ENCODE measurements at regions of chr12 and their contacts with region 1.

Region 1: DNA sequence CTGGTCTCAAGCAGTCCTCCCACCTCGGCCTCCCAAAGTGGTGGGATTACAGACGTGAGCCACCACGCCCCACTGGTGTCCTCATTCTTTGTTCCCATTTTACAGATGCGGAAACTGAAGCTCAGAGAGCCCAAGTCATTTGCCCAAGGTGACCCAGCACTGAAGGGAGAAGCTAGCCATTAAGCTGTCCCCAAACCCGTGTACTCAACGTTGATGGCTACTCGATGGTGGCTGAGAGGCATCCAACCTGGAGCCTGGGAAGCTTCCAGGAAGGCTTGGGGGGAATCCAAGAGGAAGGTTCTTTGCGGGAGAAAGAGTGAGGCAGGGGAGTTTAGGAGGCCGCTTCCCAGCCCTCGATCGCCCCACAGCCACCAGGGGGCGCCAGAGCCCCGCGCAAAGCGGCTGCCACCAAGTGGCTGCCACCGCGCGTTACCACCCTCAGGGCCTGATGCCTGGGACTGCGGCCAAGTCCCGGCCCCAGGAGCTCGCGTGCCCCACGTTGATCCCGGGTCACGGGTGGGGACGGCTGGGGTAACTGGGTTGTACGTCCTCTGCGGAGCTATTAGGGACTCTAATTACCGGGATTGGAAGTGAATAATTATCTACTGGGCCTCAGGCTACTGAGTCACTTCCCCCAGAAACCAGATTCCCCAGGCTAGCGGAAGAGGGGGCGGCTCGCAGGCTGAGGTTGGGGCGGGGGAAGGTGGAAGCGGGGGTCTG is 8.8 kb upstream of the SH2B3 start:
- DNase-seq: peak; percentile 71 to 90 (median 82)
- H3K4me3 ChIP-seq: peak overlapping the region in 57 of 59 donors; percentile 9 to 66 (median 41)
- H3K27ac ChIP-seq: peak overlapping the region in 30 of 59 donors; percentile 2 to 76 (median 48)
- H3K27me3 ChIP-seq: no peaks in the 10 kb centered on the region
- CTCF ChIP-seq: peak; percentile 95 to 100 (median 100)

Region 2: GRCh38 chr12:111451649-111452129 is 54.8 kb after region 1 on chr12:
- intact Hi-C with region 1: loop called (anchors 1 kb)
- DNase-seq: peak in 3 of 10 donors; percentile 9 to 32 (median 28)
- H3K4me3 ChIP-seq: no peak overlapping the region
- H3K27ac ChIP-seq: peak overlapping the region in 51 of 59 donors; percentile 10 to 88 (median 66)
- H3K27me3 ChIP-seq: no peaks in the 10 kb centered on the region
- CTCF ChIP-seq: peak; percentile 82 to 98 (median 91)

Region 3: DNA sequence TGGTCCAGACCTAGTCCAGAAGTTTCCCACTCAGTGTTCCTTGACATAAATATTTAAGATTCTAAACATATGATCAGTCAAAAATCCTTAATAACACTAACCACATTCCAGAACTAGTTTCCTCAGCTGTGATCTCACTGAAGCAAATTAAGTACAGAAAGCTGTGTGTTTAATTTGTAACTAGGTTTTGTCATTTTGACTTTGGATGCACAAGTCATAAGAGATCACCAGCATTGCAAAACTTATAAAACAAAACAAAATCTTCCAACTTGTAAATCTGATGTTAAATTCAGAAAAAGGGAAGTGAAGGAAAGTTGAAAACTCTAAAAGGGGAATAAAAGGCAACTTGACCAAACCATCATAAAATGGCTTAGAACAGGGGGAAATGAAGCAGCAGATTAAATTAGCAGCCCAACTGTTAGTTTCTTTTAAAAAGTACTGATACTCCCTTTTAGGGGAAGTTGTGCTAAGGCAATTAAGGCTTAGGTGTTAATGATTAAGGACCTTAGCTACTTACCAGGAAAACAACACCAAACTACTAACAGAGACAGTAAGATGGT is 65.4 kb after region 1 on chr12:
- intact Hi-C with region 1: no loop called
- DNase-seq: no peak
- H3K4me3 ChIP-seq: no peak overlapping the region
- H3K27ac ChIP-seq: peak overlapping the region in 2 of 59 donors; percentile 21 to 25
- H3K27me3 ChIP-seq: no peaks in the 10 kb centered on the region
- CTCF ChIP-seq: no peak

Region 4: DNA sequence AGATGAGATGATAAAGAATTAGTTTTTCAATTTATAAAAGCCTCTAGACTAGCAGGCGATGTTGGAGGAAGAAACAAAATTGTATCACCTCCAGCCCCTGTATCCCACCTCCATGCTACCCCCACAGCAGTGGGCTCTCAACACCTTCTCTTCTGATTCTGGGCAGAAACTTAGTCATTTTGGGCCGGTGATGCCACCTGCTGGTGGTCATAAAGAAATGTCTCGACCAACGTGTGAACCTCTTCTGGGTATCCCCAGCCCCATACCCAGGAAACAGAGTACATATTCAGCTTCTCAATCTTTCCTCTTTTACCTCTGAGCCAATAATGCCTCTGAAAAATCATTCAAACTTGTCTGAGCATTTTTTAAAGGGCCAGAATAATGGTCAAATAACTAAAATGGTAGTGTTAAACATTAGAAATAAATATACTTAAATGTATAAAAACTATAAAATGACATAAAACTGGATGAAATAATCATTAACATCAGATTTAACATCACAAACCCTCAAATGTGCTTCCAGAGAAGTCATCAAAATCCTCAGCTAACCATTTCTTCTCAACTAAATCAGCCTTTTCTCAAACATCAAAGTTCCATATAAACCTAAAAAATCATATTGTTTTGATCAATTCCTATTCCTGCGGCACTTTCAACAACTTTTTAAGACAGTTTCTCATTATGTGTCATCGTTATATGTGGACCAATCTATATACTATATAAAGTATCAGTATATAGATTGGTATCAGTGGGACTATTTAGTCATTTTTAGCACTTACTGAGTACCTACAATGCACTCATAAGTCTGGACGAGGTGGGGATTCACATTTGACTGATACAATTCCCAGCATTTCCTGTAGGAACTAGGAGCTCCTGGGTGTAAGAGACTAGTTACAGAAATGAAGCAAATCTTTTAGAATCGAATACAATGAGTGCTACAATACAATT is 132.8 kb after region 1 on chr12:
- intact Hi-C with region 1: loop called (anchors 2 to 5 kb)
- DNase-seq: peak in 6 of 10 donors; percentile 26 to 53 (median 45)
- H3K4me3 ChIP-seq: no peak overlapping the region
- H3K27ac ChIP-seq: peak overlapping the region in 2 of 59 donors; percentile 21 to 44
- H3K27me3 ChIP-seq: no peaks in the 10 kb centered on the region
- CTCF ChIP-seq: peak; percentile 51 to 85 (median 73)

Region 5: GRCh38 chr12:111673503-111673902 is 276.6 kb after region 1 on chr12:
- intact Hi-C with region 1: loop called (anchors 1 to 10 kb)
- DNase-seq: no peak
- H3K4me3 ChIP-seq: no peak overlapping the region
- H3K27ac ChIP-seq: peak overlapping the region in 9 of 59 donors; percentile 9 to 50 (median 27)
- H3K27me3 ChIP-seq: no peaks in the 10 kb centered on the region
- CTCF ChIP-seq: peak in 52 of 56 donors; percentile 11 to 69 (median 44)

Measured in dorsolateral prefrontal cortex (tissue), 120 donors.